ENCODE measurements at regions of chr21 and their contacts with region 1.

Region 1: DNA sequence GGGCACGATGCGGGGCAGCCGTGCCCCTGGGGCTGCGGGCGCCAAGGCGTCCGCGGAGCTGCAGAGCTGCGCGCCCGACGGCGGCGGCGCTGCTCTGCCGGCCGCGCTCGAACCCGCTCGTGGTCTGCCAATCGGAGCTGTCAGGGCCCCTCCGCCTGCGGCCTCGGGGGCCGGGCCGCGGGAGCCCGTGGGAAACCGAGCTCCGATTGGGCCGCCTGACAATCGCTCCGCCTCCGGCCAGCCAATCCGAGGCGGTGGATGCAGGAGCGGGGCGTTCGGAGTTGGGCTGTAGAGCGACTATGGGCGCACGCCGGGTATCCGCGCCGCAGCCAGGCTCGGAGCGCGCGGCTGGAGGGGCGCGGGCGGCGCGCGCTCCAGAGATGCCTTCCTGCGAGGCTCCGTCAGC is 100.5 kb upstream of the SOD1 start:
- DNase-seq: peak; percentile 98
- H3K4me3 Mint-ChIP-seq: peak overlapping the region; percentile 88
- H3K27ac Mint-ChIP-seq: no peak overlapping the region
- H3K4me1 Mint-ChIP-seq: peaks cover 37% of the 10 kb centered on the region
- H3K27me3 Mint-ChIP-seq: peaks cover 30% of the 10 kb centered on the region

Region 2: DNA sequence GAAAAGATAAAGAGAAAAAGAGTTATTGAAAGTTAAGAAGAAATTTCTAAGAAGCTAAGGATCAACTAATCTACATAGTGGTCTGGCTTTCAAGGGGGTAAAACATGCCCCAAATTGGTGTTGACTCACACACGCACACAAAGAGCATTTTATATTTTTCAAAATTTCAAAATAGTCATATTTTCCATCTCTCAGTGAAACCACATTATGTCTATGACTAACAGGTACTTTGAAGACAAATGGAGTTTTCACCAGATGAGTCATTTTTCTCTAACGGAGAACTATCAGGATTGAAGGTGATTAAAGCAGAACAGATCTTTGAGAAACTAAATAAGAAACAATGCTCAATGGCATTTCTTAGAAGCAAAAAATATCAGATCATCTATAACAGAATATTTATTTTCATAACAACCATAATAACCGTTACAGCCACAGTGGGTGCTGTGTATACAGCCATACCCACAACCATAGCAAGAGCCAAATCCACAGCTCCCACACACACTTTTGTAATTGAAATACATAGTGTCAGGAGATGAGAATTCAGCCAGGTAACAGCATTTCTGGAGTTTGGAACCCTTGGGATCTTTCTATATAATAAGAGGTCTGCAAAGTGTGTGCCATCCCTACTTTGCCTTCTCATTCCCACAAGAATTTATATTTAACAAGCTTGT is 840.6 kb before region 1 on chr21 and contains the start of gene KRTAP21-3:
- intact Hi-C with region 1: loop called (anchors 1 kb)
- DNase-seq: peak; percentile 67
- H3K4me3 Mint-ChIP-seq: peak within 1 kb of the TSS; percentile 62
- H3K27ac Mint-ChIP-seq: peak within 1 kb of the TSS; percentile 68
- H3K4me1 Mint-ChIP-seq: peaks cover 31% of the 10 kb centered on the region
- H3K27me3 Mint-ChIP-seq: peaks cover 2% of the 10 kb centered on the region
- total RNA-seq, gene KRTAP21-3: not detected in 2 replicates

Region 3: GRCh38 chr21:31180256-31181081 is 378.5 kb before region 1 on chr21:
- intact Hi-C with region 1: loop called (anchors 2 kb)
- DNase-seq: peak; percentile 77
- H3K4me3 Mint-ChIP-seq: peak overlapping the region; percentile 91
- H3K27ac Mint-ChIP-seq: peak overlapping the region; percentile 96
- H3K4me1 Mint-ChIP-seq: peaks cover 58% of the 10 kb centered on the region
- H3K27me3 Mint-ChIP-seq: no peaks in the 10 kb centered on the region

Region 4: DNA sequence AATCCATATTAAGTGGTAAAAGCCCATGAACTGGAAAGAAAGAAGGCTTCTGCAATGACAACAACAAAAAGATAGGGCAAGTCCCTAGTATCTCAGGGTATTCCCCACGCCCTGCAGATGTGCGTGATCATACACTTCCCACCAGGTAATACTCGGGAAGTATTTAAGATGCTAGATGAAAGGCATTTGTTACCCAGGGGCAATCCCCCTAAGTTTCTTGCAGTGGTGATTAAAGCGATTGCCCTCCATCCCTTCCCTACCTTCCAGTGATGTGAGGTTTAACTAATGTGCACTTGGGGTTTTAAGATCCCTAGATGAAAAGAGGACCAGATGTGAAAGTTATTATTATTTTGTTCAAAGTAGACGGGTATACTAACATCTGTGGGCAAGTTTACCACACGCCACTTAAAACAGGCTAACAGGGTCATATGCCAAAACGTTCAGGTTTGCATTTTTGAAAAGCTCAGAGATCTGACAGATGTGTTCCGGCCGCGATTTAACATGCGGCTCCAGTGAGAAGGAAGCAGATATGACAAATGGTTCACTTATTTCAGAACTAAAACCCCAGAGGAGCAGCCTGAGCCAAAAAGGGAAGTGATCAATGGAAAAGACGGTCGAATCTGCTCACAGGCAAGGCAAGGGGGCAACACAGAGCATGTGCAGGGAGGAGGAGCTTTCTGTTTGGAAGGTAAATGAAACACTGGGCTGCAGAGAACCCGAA is 232.3 kb before region 1 on chr21:
- intact Hi-C with region 1: loop called (anchors 2 kb)
- DNase-seq: peak; percentile 80
- H3K4me3 Mint-ChIP-seq: peak overlapping the region; percentile 74
- H3K27ac Mint-ChIP-seq: peak overlapping the region; percentile 92
- H3K4me1 Mint-ChIP-seq: peaks cover 28% of the 10 kb centered on the region
- H3K27me3 Mint-ChIP-seq: no peaks in the 10 kb centered on the region

Region 5: DNA sequence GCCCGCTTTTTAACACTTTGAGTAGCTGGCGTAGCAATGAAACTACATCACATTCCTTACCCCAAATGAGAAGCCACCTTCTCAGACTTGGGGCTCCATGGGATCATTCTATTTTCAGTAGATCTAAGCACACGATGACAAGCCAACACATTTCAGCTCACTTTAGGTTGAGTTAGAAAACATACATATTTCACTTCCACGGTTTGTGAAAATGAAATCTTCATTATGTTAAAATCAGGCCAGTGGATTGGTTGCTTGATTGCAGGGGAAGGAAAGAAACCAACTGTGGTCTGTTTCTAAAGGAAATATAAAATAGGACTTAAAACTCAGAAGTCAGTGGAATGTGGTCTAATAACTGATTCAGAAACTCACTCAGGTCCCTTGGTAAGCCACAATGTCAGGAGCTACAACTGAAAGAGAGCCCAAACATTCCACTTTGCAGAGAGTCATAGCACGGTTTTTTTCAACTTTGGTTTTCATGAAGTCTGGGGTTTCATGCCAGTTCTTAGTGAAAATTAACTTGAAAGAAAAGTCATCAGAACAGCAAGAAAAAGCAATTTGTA is 132.6 kb before region 1 on chr21:
- intact Hi-C with region 1: loop called (anchors 2 kb)
- DNase-seq: peak; percentile 67
- H3K4me3 Mint-ChIP-seq: peak overlapping the region; percentile 26
- H3K27ac Mint-ChIP-seq: peak overlapping the region; percentile 66
- H3K4me1 Mint-ChIP-seq: peaks cover 16% of the 10 kb centered on the region
- H3K27me3 Mint-ChIP-seq: peaks cover 7% of the 10 kb centered on the region

Region 6: GRCh38 chr21:31659536-31660258 is 100.7 kb after region 1 on chr21 and contains the start of gene SOD1:
- intact Hi-C with region 1: loop called (anchors 2 kb)
- DNase-seq: peak; percentile 99
- H3K4me3 Mint-ChIP-seq: peak within 1 kb of the TSS; percentile 96
- H3K27ac Mint-ChIP-seq: peak within 1 kb of the TSS; percentile 100
- H3K4me1 Mint-ChIP-seq: peaks cover 63% of the 10 kb centered on the region
- H3K27me3 Mint-ChIP-seq: no peaks in the 10 kb centered on the region
- total RNA-seq, gene SOD1: 336 and 342 TPM in 2 replicates

Measured in activated CD4-positive, alpha-beta T cell treated with anti-CD3 and anti-CD28 coated beads, Interleukin-2, amount 10 ng/mL, durations not matched to agents 24 days and 14 days (primary cell).